ENCODE measurements at regions of chr4 and their contacts with region 1.

Region 1: GRCh38 chr4:74376888-74377483 is 12.0 kb downstream of the EREG start:
- DNase-seq: peak; percentile 60
- ATAC-seq: peak; percentile 14; the same call in 1 of the 2 replicates
- H3K4me3 ChIP-seq: peak overlapping the region; percentile 56
- H3K27ac ChIP-seq: peak overlapping the region; percentile 100
- H3K4me1 ChIP-seq: peaks cover 40% of the 10 kb centered on the region
- H3K27me3 ChIP-seq: no peaks in the 10 kb centered on the region
- CTCF ChIP-seq: peak; percentile 71

Region 2: DNA sequence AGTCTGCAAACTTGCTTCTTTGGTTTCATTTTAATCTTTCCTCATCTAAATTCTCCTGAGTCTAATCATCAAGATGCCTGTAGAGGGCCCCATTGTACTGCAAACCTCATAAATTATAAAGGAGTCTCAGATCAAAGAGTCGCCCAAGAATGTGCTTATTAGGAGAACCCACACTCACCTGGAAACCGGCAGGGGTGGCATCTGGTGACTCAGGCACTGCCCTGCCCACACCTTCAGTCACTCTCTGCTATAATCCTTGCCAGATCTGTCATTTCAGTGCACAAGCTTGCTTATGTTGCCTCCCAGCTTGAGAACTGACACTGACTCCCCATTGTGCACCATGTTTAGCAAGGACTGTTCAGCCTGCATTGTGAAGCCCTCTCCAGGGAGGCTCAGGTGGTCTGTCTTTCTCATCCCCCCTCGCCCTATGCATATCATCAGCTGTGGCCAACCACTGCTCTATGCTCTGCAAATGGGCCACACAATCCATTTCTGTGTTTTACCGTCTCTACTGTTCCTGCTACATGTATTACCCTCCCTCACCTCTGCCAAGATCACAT is 56.3 kb before region 1 on chr4:
- CTCF ChIA-PET with region 1: no interaction called
- POLR2A ChIA-PET with region 1: no interaction called
- intact Hi-C with region 1: loop called (anchors 1 kb)
- DNase-seq: peak; percentile 95
- ATAC-seq: peak; percentile 90
- H3K4me3 ChIP-seq: peak overlapping the region; percentile 15; the same call in 1 of the 2 replicates
- H3K27ac ChIP-seq: peak overlapping the region; percentile 95
- H3K4me1 ChIP-seq: peaks cover 28% of the 10 kb centered on the region
- H3K27me3 ChIP-seq: no peaks in the 10 kb centered on the region
- CTCF ChIP-seq: peak; percentile 78

Region 3: GRCh38 chr4:74640111-74640903 is 263.3 kb after region 1 on chr4:
- CTCF ChIA-PET with region 1: no interaction called
- POLR2A ChIA-PET with region 1: no interaction called
- intact Hi-C with region 1: no loop called
- DNase-seq: peak; percentile 46
- ATAC-seq: peak; percentile 59; the same call in 1 of the 2 replicates
- H3K4me3 ChIP-seq: no peak overlapping the region
- H3K27ac ChIP-seq: no peak overlapping the region
- H3K4me1 ChIP-seq: peaks cover 11% of the 10 kb centered on the region
- H3K27me3 ChIP-seq: no peaks in the 10 kb centered on the region
- CTCF ChIP-seq: no peak